ENCODE measurements at regions of chr2 and their contacts with region 1.

Region 1: GRCh38 chr2:233165895-233166661 is 85.4 kb upstream of the ATG16L1 start:
- DNase-seq: peak; percentile 44 to 53
- ATAC-seq: peak; percentile 63 to 74 (median 72)
- H3K4me3 ChIP-seq: no peak overlapping the region
- H3K4me3 Mint-ChIP-seq: no peak overlapping the region
- H3K27ac ChIP-seq: peak overlapping the region; percentile 64
- H3K27ac Mint-ChIP-seq: no peak overlapping the region
- H3K4me1 ChIP-seq: peaks cover 58% of the 10 kb centered on the region
- H3K4me1 Mint-ChIP-seq: peaks cover 18 to 23% of the 10 kb centered on the region in 2 donors
- H3K27me3 ChIP-seq: no peaks in the 10 kb centered on the region
- H3K27me3 Mint-ChIP-seq: no peaks in the 10 kb centered on the region
- CTCF ChIP-seq: no peak

Region 2: DNA sequence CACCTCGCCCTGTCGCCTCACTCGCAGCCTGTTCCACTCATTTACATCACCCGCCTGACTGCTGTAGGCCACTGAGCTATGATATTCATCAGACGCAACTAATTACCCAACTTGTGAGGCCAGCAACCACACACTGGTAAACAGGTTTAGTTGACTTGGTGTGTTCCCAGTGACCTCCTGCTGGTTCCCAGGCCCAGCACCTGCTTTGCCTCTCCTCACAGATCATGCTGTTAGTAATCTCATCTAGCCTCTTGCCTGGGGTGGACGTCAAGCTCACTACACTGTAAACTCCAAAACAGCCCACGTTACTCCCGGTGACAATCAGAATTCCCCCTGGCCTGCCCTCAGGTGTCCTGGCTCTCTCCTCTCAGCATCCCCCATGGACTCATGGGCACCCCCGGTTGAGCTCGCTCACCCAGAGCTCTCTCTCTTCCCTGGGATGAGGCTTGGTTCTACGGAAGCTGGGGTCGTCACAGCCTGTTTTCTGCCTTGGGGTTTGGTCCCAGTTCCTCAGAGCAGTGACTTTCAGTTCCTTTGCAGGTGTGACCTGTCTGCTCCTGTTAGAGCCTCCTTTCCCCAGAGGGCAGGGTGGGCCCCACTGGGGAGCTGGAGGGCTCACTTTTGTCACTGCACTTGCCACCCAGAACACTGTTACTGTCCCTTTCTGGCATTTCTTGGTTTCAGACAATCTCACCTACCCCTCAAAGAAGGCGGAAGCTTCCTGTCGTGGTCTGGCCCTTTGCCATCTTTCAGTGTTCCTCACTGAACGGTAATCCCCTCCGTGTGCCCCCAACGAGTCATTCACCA is 65.7 kb before region 1 on chr2:
- intact Hi-C with region 1: loop called (anchors 10 kb)
- DNase-seq: peak; percentile 70 to 91
- ATAC-seq: peak; percentile 70 to 84 (median 78)
- H3K4me3 ChIP-seq: peak overlapping the region; percentile 4
- H3K4me3 Mint-ChIP-seq: peak overlapping the region; percentile 83
- H3K27ac ChIP-seq: peak overlapping the region; percentile 88
- H3K27ac Mint-ChIP-seq: peak overlapping the region; percentile 98 to 99
- H3K4me1 ChIP-seq: peaks cover 73% of the 10 kb centered on the region
- H3K4me1 Mint-ChIP-seq: peaks cover 80 to 84% of the 10 kb centered on the region in 2 donors
- H3K27me3 ChIP-seq: no peaks in the 10 kb centered on the region
- H3K27me3 Mint-ChIP-seq: no peaks in the 10 kb centered on the region
- CTCF ChIP-seq: no peak

Region 3: GRCh38 chr2:233234264-233234663 is 68.2 kb after region 1 on chr2:
- intact Hi-C with region 1: loop called (anchors 5 kb)
- DNase-seq: peak in 1 of 2 donors; percentile 51
- ATAC-seq: peak; percentile 46 to 65 (median 49)
- H3K4me3 ChIP-seq: no peak overlapping the region
- H3K4me3 Mint-ChIP-seq: peak overlapping the region; percentile 70
- H3K27ac ChIP-seq: peak overlapping the region; percentile 15
- H3K27ac Mint-ChIP-seq: peak overlapping the region; percentile 70 to 75
- H3K4me1 ChIP-seq: peaks cover 92% of the 10 kb centered on the region
- H3K4me1 Mint-ChIP-seq: peaks cover 41 to 67% of the 10 kb centered on the region in 2 donors
- H3K27me3 ChIP-seq: no peaks in the 10 kb centered on the region
- H3K27me3 Mint-ChIP-seq: no peaks in the 10 kb centered on the region
- CTCF ChIP-seq: no peak

Measured in natural killer cell (primary cell).